PC-9 (cell line): ENCODE measurements at regions of chr2 and their contacts with region 1.

Region 1: DNA sequence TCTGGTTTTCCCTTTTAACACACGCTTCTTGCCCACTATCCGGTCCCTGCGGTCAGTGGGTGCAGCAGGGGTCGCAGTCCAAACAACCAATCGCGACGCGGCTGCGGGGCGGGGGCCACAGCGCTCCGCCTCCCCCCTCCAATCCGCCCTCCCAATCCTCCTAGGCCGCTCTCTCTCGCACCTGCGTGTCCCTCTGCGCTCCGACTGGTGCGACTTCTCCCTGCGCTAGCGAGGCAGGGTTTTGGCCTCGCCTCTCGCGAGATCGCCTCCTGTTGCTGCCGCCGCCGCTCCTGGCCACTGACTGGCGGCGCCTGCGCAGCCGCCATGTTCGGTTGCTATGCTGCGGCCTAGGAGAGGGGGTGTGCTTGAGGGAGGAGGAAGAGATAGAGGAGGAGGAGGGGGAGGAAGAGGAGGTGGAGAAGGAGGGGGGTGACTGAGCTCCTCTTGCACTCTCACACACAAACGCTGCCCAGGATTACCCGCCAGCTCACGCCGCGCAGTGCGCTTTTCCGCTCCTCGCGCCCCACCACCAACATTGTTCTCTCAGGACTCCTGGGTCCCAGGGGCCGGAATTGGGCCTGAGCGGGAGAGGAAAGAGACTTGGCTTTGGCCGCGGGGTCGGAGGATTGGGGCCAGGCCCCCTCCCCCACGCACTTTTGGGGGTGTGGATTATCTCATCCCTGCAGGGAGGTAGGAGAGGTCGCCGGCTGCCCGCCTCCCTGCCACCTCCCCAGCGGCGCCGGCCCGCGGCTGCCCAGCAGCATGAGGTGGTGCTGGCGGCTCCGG is at the start of gene PTPN4:
- DNase-seq: peak; percentile 99
- H3K4me3 ChIP-seq: peak within 1 kb of the TSS; percentile 91
- H3K27ac ChIP-seq: peak within 1 kb of the TSS; percentile 86
- H3K4me1 ChIP-seq: peaks cover 39% of the 10 kb centered on the region
- H3K27me3 ChIP-seq: no peaks in the 10 kb centered on the region
- CTCF ChIP-seq: no peak
- total RNA-seq, gene PTPN4: 46.6 and 60.7 TPM in 2 replicates

Region 2: DNA sequence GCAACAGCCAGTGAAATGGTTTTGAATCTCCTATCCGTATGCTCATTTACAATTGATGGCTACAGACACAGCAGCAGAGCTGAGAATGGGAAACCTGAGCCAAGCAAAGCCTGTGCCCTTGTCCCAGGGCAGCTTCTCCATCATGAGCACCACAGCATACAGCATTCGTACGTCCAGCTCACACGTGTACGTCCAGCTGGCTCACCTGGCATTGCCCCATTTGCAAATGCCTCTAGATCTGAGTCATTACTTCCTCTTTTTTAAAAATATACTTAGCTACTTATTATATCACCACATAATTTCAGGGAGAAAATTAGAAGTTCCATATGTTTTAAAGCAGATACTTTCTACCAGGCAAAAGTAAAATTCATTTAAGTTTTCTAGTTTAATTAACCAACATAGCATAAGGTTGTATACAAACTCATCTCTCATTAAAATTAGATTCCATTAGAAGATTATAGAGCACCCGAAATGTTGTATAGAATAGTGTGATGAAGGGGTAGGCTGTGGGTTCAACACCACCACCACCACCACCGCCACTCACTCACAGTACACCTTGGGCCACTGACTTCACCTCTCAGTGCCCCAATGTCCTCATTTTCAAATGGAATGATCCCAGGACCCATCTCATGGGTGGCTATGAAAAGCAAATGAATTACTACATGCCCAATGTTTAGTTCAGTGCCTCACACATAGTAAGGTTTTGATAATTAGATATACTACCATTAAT is 112.0 kb before region 1 on chr2:
- CTCF ChIA-PET with region 1: no interaction called
- POLR2A ChIA-PET with region 1: no interaction called
- intact Hi-C with region 1: loop called (anchors 2 kb)
- DNase-seq: peak; percentile 47 to 65
- H3K4me3 ChIP-seq: no peak overlapping the region
- H3K27ac ChIP-seq: no peak overlapping the region
- H3K4me1 ChIP-seq: peaks cover 26% of the 10 kb centered on the region
- H3K27me3 ChIP-seq: no peaks in the 10 kb centered on the region
- CTCF ChIP-seq: no peak

Region 3: DNA sequence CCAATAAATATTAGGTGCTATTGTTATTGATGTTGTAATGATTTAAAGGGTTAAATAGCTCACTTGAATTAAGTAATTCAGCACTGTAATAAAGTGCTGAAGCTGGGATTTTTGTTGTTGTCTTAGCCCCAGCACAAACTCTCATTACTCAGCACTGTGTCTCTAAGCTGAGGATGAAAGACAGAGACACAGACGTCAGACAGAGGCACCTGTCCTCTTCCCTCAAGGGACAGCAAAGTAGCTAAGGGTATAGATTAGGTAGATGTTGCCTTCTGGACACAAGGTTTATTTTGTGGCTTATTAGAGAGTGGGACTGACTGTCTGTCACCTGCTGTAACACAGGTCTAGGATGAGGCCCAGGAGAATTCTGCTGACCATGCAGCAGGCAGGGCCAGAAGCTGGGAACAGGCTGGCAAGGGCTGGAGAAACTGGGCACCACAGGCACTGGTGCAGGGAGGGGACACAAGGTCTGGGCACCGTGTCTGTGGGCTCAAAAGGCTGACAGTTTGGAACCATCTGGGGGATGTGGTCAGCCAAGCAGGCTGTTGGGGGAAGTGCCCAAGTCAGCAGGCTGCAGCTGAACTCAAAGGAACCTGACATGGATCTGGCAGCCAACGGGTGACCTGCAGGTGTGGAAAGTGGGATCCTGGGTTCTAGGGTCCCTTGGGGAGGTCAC is 19.9 kb before region 1 on chr2:
- CTCF ChIA-PET with region 1: no interaction called
- POLR2A ChIA-PET with region 1: no interaction called
- intact Hi-C with region 1: no loop called
- DNase-seq: no peak
- H3K4me3 ChIP-seq: no peak overlapping the region
- H3K27ac ChIP-seq: no peak overlapping the region
- H3K4me1 ChIP-seq: peaks cover 11% of the 10 kb centered on the region
- H3K27me3 ChIP-seq: no peaks in the 10 kb centered on the region
- CTCF ChIP-seq: no peak

Region 4: DNA sequence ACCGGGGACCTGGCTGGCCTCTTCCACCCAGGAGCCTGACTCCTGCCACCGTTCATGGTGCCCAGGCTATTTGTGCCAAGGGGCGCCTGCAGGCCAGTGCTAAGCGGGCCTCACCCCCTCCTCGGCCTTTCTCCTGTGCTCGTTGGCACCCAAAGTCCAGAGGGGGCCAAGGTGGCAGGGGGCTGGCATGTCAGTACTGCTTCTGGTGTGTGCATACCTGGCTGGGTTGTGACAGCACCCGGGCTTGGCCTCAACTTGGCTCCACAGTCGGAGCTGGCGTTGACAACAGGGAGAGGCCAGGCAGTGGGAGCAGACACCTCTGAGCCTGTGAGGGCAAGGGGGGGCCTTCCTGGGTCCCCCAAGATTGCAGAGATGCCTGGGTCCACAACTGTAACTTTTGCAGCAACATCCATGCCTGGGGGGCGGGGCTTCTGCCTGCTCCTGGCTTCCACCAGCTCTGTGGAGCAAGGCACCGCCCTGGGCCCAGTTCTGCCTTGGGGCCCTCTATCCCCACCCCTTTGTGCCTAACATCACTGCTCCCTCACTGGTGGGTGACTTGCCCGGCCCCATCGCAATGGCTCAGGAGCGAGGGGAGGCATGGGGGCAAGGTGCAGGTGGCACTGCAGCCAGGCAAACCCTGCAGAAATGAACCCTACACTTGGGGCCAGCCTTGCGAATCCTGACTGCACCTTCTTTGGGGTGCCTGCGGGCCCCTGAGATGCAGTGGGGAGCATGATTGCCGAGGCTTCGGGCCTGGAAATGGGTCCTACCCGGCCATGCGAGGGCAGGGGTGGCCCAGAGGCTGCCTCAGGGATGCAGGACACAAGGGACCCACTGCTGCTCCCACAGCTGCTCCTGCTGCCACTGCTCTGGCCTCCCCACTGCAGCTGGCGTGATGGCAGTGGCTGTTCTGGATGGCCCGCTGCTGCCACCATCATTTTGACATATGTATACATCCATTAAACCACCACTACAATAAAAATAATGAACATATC is 36.0 kb after region 1 on chr2:
- CTCF ChIA-PET with region 1: no interaction called
- POLR2A ChIA-PET with region 1: no interaction called
- intact Hi-C with region 1: no loop called
- DNase-seq: no peak
- H3K4me3 ChIP-seq: no peak overlapping the region
- H3K27ac ChIP-seq: no peak overlapping the region
- H3K4me1 ChIP-seq: no peaks in the 10 kb centered on the region
- H3K27me3 ChIP-seq: no peaks in the 10 kb centered on the region
- CTCF ChIP-seq: no peak

Region 5: DNA sequence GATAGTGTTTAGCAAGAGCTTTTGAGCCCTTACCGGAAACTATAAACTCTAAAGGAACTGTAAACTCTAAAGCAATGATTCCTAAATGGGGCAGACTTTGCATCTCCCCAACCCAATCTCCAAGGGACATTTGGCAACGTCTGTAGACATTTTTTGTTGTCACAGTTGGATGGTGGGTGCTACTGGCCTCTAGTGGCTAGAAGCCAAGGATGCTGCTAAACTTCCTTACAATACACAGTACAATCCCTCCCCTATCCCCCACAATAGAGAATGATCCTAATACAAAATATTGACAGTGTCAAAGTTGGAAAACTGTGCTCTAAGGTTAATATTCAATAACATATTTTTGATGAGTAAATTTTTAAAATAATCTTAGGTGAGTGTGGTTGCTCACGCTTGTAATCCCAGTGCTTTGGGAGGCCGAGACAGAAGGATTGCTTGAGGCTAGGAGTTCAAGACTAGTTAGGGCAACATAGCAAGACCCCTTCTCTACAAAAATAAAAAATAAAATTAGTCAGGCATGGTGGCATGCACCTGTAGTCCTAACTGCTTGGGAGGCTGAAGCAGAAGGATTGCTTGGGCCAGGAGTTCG is 66.8 kb after region 1 on chr2:
- CTCF ChIA-PET with region 1: interaction called, 12 read pairs
- POLR2A ChIA-PET with region 1: no interaction called
- intact Hi-C with region 1: loop called (anchors 2 kb)
- DNase-seq: no peak
- H3K4me3 ChIP-seq: no peak overlapping the region
- H3K27ac ChIP-seq: no peak overlapping the region
- H3K4me1 ChIP-seq: no peaks in the 10 kb centered on the region
- H3K27me3 ChIP-seq: no peaks in the 10 kb centered on the region
- CTCF ChIP-seq: peak; percentile 65

Region 6: GRCh38 chr2:120053891-120054290 is 294.2 kb after region 1 on chr2:
- CTCF ChIA-PET with region 1: no interaction called
- POLR2A ChIA-PET with region 1: no interaction called
- intact Hi-C with region 1: no loop called
- DNase-seq: no peak
- H3K4me3 ChIP-seq: no peak overlapping the region
- H3K27ac ChIP-seq: no peak overlapping the region
- H3K4me1 ChIP-seq: 0 out of 2 replicates have a peak, but pooled peaks cover 8% of the 10 kb centered on the region
- H3K27me3 ChIP-seq: no peaks in the 10 kb centered on the region
- CTCF ChIP-seq: no peak

Region 7: DNA sequence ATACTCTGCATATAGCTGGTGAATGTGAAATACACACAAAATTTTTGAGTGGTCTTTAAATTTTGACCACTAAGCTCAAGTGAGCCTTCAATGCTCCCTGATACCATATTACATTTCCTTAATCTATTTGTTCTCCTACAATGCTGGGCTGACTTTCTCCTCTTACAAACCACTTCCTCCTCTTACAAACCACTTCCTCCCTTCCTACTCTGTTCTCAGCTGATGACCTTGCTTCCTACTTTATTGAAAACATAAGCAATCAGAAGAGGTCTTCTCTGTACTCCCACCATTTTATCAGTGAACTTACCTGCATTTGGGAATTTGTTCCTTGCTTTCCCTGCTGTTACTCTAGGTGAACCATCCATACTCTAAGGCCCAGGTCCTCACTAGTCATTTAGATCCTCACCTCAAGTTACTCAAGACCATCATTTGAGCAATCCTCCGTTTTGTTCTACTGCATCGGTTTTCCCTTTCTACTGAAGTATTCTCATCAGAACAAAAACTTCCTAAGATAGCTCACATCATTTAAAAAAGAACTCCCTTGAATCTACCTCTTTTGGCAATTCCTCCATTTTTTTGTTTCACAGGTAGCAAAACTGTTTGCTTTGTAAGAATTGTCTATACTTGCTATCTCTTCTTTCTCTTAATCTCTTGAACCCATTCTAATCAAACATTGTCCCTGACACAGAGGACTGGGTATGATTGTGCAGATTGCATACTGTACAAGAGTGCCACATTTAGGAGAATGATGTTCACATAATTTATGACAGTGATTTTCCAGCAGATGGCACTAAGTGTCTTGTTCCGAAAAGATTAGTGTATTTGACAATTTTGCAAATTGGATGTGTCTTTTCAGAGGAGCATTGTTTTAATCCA is 349.8 kb after region 1 on chr2:
- CTCF ChIA-PET with region 1: no interaction called
- POLR2A ChIA-PET with region 1: interaction called, 4 read pairs
- intact Hi-C with region 1: loop called (anchors 5 kb)
- DNase-seq: peak in 1 of 2 experiments; percentile 54
- H3K4me3 ChIP-seq: no peak overlapping the region
- H3K27ac ChIP-seq: no peak overlapping the region
- H3K4me1 ChIP-seq: peaks cover 32% of the 10 kb centered on the region
- H3K27me3 ChIP-seq: no peaks in the 10 kb centered on the region
- CTCF ChIP-seq: peak; percentile 73

Region 8: GRCh38 chr2:120312861-120313694 is 553.4 kb after region 1 on chr2:
- CTCF ChIA-PET with region 1: no interaction called
- POLR2A ChIA-PET with region 1: no interaction called
- intact Hi-C with region 1: loop called (anchors 5 kb)
- DNase-seq: peak; percentile 77 to 90
- H3K4me3 ChIP-seq: no peak overlapping the region
- H3K27ac ChIP-seq: no peak overlapping the region
- H3K4me1 ChIP-seq: no peaks in the 10 kb centered on the region
- H3K27me3 ChIP-seq: no peaks in the 10 kb centered on the region
- CTCF ChIP-seq: peak; percentile 98